ENCODE measurements at regions of chr6 and their contacts with region 1.

Region 1: DNA sequence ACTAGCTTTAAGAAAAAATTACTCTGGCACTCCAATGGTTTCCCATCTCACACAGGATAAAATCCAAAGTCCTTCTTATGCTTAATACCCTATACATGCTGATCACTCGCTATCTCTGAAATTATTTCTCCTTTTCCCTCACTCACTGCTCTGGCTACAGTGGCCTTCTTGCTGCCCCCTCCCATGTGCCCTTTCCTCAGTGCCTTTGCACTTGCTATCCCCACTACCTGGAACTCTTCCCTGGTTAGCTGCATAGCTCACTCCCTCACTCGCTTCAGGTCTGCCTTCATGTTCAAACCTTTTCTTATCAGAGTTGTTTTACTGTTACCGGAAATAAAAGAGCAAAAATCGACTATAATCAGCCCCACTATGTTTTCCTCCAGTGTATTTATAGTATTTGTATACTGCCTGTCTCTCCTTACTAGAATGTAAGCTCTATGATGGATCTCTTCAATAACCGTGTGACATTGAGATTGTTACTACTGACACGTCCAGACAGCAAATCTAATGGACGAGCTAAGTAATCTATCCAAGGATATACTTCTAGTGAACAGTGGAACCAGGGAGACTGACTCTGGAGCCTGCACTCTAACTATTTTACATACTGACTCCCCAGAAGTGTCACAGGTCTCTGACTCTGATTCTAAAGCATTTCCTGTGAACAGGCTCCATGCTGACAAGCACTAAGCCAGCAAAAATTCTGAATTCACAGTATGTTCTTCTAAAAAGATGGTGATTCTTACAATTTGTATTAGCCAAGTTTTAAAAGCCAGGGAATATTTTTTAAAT is 25.1 kb downstream of the FKBP5 start:
- DNase-seq: no peak
- ATAC-seq: peak; percentile 50
- H3K4me3 ChIP-seq: no peak overlapping the region
- H3K27ac ChIP-seq: peak overlapping the region; percentile 32; the same call in 1 of the 2 replicates
- H3K4me1 ChIP-seq: peaks cover 17% of the 10 kb centered on the region
- H3K27me3 ChIP-seq: no peaks in the 10 kb centered on the region
- CTCF ChIP-seq: no peak
- EP300 ChIP-seq: no peak
- POLR2A ChIP-seq: no peak
- RAD21 ChIP-seq: no peak

Region 2: GRCh38 chr6:35640017-35640664 is 23.5 kb before region 1 on chr6:
- CTCF ChIA-PET with region 1: interaction called, 5 read pairs
- POLR2A ChIA-PET with region 1: interaction called, 6 read pairs
- RAD21 ChIA-PET with region 1: interaction called, 4 read pairs
- SMC1A ChIA-PET with region 1: interaction called, 17 read pairs
- in situ Hi-C with region 1: no loop called
- intact Hi-C with region 1: no loop called
- DNase-seq: no peak
- ATAC-seq: no peak
- H3K4me3 ChIP-seq: no peak overlapping the region
- H3K27ac ChIP-seq: no peak overlapping the region
- H3K4me1 ChIP-seq: peaks cover 5% of the 10 kb centered on the region
- H3K27me3 ChIP-seq: no peaks in the 10 kb centered on the region
- CTCF ChIP-seq: no peak
- EP300 ChIP-seq: no peak
- POLR2A ChIP-seq: no peak
- RAD21 ChIP-seq: no peak

Region 3: DNA sequence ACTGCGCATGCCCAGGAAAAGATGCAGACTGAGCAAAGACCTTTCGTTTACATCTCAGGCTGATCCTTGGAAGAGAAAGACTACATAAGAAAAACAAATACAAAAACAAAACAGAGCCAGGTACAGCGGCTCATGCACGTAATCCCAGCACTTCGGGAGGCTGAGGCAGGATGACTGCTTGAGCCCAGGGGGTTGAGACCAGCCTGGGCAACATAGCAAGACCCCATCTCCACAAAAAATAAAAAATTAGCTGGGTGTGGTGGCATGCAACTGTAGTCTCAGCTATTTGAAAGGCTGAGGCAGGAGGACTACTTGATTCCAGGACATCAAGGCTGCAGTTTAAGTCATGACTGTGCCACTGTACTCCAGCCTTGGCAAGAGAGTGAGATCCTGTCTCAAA is 215.5 kb after region 1 on chr6:
- CTCF ChIA-PET with region 1: no interaction called
- POLR2A ChIA-PET with region 1: no interaction called
- RAD21 ChIA-PET with region 1: no interaction called
- SMC1A ChIA-PET with region 1: no interaction called
- in situ Hi-C with region 1: no loop called
- intact Hi-C with region 1: no loop called
- DNase-seq: no peak
- ATAC-seq: no peak
- H3K4me3 ChIP-seq: no peak overlapping the region
- H3K27ac ChIP-seq: no peak overlapping the region
- H3K4me1 ChIP-seq: no peaks in the 10 kb centered on the region
- H3K27me3 ChIP-seq: no peaks in the 10 kb centered on the region
- CTCF ChIP-seq: no peak
- EP300 ChIP-seq: no peak
- POLR2A ChIP-seq: no peak
- RAD21 ChIP-seq: no peak

Region 4: GRCh38 chr6:36623547-36624459 is 960.2 kb after region 1 on chr6:
- CTCF ChIA-PET with region 1: no interaction called
- POLR2A ChIA-PET with region 1: no interaction called
- RAD21 ChIA-PET with region 1: no interaction called
- SMC1A ChIA-PET with region 1: no interaction called
- in situ Hi-C with region 1: no loop called
- intact Hi-C with region 1: no loop called
- DNase-seq: peak; percentile 68
- ATAC-seq: peak; percentile 84
- H3K4me3 ChIP-seq: no peak overlapping the region
- H3K27ac ChIP-seq: peak overlapping the region; percentile 63
- H3K4me1 ChIP-seq: peaks cover 35% of the 10 kb centered on the region
- H3K27me3 ChIP-seq: no peaks in the 10 kb centered on the region
- CTCF ChIP-seq: peak; percentile 89 to 95 (median 95)
- EP300 ChIP-seq: no peak
- POLR2A ChIP-seq: no peak
- RAD21 ChIP-seq: peak; percentile 98

Measured in GM12878 (cell line).